ENCODE measurements at regions of chr11 and their contacts with region 1.

Region 1: GRCh38 chr11:126800009-126800408 is 200.6 kb downstream of the KIRREL3 start:
- DNase-seq: no peak
- H3K4me3 ChIP-seq: no peak overlapping the region
- H3K27ac ChIP-seq: no peak overlapping the region
- H3K4me1 ChIP-seq: no peaks in the 10 kb centered on the region
- H3K27me3 ChIP-seq: no peaks in the 10 kb centered on the region
- CTCF ChIP-seq: no peak

Region 2: DNA sequence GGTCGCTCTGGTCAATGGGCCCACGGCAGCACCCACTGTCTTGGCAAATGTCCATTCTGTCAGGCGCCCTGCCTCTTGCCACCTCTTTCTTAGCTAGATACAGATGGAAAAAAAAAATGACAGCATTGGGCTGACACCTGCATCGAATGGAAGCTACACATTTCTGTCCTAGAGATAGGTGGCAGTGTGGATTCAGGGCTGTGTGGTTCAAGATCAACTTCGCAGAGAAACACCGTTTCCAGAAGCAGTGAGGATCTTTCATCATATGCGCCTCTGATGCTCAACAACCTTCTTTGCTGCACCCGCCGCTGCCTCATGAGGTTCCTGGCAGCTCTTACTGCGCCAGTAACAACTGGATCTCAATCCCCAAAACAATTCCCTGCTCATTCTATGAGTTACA is 35.8 kb before region 1 on chr11:
- CTCF ChIA-PET with region 1: no interaction called
- dilution Hi-C with region 1: no loop called
- in situ Hi-C with region 1: no loop called
- intact Hi-C with region 1: no loop called
- DNase-seq: no peak
- H3K4me3 ChIP-seq: no peak overlapping the region
- H3K27ac ChIP-seq: no peak overlapping the region
- H3K4me1 ChIP-seq: no peaks in the 10 kb centered on the region
- H3K27me3 ChIP-seq: no peaks in the 10 kb centered on the region
- CTCF ChIP-seq: peak in 1 of 2 donors; percentile 32

Region 3: DNA sequence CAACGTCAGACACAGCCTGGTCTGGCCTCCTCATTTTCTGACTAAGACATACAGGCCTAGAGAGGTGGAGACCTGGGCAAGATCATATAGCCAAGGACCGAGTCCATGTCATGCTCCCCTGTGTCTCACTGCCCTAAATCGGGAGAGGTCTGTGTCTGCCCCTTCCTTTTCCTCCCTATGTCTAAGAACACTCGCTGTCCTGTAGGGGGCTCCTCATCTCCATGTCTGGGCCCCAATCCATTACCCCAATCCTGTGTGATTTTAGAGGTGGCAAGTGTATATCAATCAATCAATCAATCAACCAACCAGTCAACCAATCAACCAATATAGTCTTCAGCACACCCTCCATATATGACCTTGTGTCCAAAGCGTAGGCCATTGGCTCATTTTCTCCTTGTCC is 74.8 kb after region 1 on chr11:
- CTCF ChIA-PET with region 1: no interaction called
- dilution Hi-C with region 1: loop called (anchors 5 kb)
- in situ Hi-C with region 1: no loop called
- intact Hi-C with region 1: no loop called
- DNase-seq: no peak
- H3K4me3 ChIP-seq: no peak overlapping the region
- H3K27ac ChIP-seq: no peak overlapping the region
- H3K4me1 ChIP-seq: no peaks in the 10 kb centered on the region
- H3K27me3 ChIP-seq: no peaks in the 10 kb centered on the region
- CTCF ChIP-seq: peak in 1 of 2 donors; percentile 32

Measured in mammary epithelial cell (primary cell).